ENCODE measurements at regions of chr1 and their contacts with region 1.

Region 1: GRCh38 chr1:6489799-6490180 is 1.7 kb downstream of the PLEKHG5 start:
- DNase-seq: peak; percentile 71
- H3K4me3 ChIP-seq: peak overlapping the region; percentile 26 to 62 (median 43)
- H3K27ac ChIP-seq: peak overlapping the region; percentile 86
- H3K4me1 ChIP-seq: peaks cover 44% of the 10 kb centered on the region
- H3K27me3 ChIP-seq: no peaks in the 10 kb centered on the region
- CTCF ChIP-seq: peak; percentile 90 to 97
- POLR2A ChIP-seq: no peak

Region 2: GRCh38 chr1:6235296-6235677 is 254.5 kb before region 1 on chr1:
- CTCF ChIA-PET with region 1: no interaction called
- POLR2A ChIA-PET with region 1: no interaction called
- dilution Hi-C with region 1: no loop called
- intact Hi-C with region 1: no loop called
- DNase-seq: no peak
- H3K4me3 ChIP-seq: peak overlapping the region; percentile 66 to 80 (median 68)
- H3K27ac ChIP-seq: peak overlapping the region; percentile 6
- H3K4me1 ChIP-seq: peaks cover 11% of the 10 kb centered on the region
- H3K27me3 ChIP-seq: peaks cover 8 to 9% of the 10 kb centered on the region in 2 experiments
- CTCF ChIP-seq: no peak
- POLR2A ChIP-seq: no peak

Region 3: DNA sequence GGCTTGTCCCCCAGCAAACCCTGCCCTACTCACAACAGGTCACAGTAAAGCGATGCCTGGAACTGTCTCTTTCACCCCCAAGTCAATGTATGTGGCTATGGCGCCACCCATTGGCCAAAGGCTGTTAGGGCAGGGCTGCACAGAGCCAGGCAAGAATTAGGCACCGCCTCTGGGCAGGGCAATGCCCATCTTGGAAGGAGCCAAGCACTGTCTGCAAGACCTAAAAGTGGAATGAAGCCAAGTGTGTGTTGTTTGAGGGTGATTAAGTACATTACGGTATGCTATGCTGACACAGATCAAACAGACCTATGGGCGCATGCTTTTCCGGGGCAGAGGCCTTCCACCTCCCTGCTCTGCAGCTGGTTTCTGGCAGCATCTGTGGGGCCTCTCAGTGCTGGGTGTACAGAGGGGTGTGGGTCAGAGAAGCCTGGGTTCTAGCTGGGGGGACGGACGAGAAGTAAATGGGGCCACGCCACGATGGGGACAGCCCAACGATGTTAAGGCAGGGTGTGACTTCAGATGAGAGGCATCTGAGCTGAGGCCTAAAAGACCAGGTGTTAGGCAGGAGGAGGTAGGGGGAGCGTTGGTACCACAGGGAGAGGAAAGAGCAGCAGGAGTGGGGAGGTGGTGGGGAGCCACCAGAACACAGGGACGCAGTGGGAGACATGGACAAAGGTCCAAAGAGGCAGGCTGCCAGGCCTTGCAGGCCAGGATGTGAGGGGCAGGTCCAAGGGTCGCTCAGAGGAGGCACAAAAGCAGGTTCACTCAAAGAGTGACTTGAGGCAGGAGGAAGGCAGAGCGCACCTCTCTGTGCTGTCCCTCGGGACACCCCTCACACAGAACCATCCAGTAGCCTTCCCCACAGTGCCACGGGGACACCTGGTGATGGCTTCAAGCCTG is 146.0 kb before region 1 on chr1:
- CTCF ChIA-PET with region 1: no interaction called
- POLR2A ChIA-PET with region 1: no interaction called
- dilution Hi-C with region 1: no loop called
- intact Hi-C with region 1: no loop called
- DNase-seq: peak; percentile 67
- H3K4me3 ChIP-seq: no peak overlapping the region
- H3K27ac ChIP-seq: no peak overlapping the region
- H3K4me1 ChIP-seq: peaks cover 7% of the 10 kb centered on the region
- H3K27me3 ChIP-seq: no peaks in the 10 kb centered on the region
- CTCF ChIP-seq: peak; percentile 89 to 94
- POLR2A ChIP-seq: no peak

Region 4: DNA sequence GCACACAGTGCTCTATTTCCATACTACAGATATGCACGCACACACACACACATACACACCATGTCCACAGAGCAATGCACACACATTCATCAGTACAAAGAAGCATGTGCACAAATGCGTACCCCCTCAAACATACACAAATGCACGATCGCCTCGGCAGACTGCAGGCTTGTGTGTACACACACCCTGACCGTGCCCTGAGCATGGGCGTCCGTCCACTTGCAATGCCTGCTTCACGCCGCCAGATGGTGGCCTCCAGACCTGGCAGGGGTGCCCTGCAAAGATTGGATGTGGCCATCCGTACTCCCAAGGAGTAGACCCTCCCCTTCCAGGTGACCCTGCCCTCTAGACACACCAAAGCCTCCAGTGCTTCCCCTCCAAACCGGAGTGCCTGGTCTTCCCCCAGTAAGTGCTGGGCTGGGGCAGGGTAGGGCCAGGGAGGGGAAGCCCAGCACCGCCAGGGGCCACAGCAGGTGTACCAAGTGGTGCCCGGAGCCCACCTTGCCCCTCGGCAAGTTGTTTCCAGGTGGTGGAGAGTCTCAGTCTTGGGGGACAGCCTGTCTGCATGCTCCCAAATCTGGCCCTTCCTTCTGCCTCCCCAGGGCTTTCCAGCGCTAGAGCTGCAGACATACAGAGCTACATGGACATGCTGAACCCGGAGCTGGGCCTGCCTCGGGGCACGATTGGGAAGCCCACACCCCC is 44.6 kb before region 1 on chr1:
- CTCF ChIA-PET with region 1: interaction called, 9 read pairs
- POLR2A ChIA-PET with region 1: no interaction called
- dilution Hi-C with region 1: no loop called
- intact Hi-C with region 1: loop called (anchors 2 kb)
- DNase-seq: peak; percentile 35
- H3K4me3 ChIP-seq: no peak overlapping the region
- H3K27ac ChIP-seq: no peak overlapping the region
- H3K4me1 ChIP-seq: no peaks in the 10 kb centered on the region
- H3K27me3 ChIP-seq: peaks cover 32 to 34% of the 10 kb centered on the region in 2 experiments
- CTCF ChIP-seq: peak; percentile 38 to 69
- POLR2A ChIP-seq: no peak

Region 5: GRCh38 chr1:6502000-6502891 is 12.5 kb after region 1 on chr1:
- CTCF ChIA-PET with region 1: interaction called, 36 read pairs
- POLR2A ChIA-PET with region 1: no interaction called
- dilution Hi-C with region 1: no loop called
- intact Hi-C with region 1: no loop called
- DNase-seq: peak; percentile 45
- H3K4me3 ChIP-seq: no peak overlapping the region
- H3K27ac ChIP-seq: no peak overlapping the region
- H3K4me1 ChIP-seq: peaks cover 3% of the 10 kb centered on the region
- H3K27me3 ChIP-seq: no peaks in the 10 kb centered on the region
- CTCF ChIP-seq: no peak
- POLR2A ChIP-seq: no peak

Region 6: DNA sequence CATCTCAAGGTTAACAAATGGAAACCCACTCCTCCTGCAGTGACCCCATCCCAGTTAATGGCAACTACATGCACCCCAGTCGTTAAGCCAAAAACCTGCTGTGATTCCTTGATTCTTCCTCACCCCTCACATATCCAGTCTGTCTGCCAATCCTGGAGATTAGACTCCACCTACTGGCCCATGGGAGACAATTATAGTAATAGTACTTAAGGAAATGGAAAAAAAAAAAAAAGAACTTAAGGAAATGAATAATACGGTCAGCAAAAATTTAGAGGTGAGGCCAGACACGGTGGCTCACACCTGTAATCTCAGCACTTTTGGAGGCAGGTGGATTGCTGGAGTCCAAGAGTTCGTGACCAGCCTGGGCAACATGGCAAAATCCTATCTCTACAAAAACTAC is 57.5 kb after region 1 on chr1:
- CTCF ChIA-PET with region 1: interaction called, 9 read pairs
- POLR2A ChIA-PET with region 1: no interaction called
- dilution Hi-C with region 1: no loop called
- intact Hi-C with region 1: loop called (anchors 1 kb)
- DNase-seq: peak; percentile 60
- H3K4me3 ChIP-seq: no peak overlapping the region
- H3K27ac ChIP-seq: no peak overlapping the region
- H3K4me1 ChIP-seq: peaks cover 35% of the 10 kb centered on the region
- H3K27me3 ChIP-seq: no peaks in the 10 kb centered on the region
- CTCF ChIP-seq: peak; percentile 15 to 20
- POLR2A ChIP-seq: no peak

Region 7: DNA sequence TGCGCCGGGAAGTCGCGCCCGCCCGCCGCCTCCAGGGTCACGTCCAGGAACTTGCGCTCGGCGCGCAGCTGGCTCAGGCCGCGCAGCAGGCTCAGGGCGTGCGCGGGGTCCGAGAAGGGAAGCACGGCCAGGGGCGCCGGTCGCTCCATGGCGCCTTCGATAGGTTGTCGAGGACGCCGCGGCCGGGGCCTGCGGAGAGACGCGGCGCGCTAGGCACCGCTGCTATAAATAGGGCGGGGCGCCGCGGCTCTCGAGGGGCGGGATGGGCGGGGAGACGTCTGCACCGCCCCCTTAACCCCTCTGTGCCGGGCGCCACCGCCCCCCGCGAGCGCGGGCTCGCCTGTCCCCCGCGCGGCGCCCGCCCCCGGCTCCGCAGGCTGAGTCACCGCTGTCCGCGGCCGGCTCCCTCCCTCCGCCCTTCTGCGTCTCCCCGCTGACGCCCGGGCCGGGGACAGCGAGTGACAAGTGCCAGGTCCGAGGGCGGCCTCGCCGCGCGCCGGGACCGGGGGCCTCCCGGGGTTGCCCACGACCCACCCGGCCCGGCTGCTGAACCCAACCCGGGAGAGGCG is 113.0 kb after region 1 on chr1 and contains the start of gene KLHL21:
- CTCF ChIA-PET with region 1: interaction called, 4 read pairs
- POLR2A ChIA-PET with region 1: no interaction called
- dilution Hi-C with region 1: no loop called
- intact Hi-C with region 1: loop called (anchors 2 kb)
- DNase-seq: peak; percentile 84
- H3K4me3 ChIP-seq: peak within 1 kb of the TSS; percentile 39 to 84 (median 74)
- H3K27ac ChIP-seq: peak within 1 kb of the TSS; percentile 86
- H3K4me1 ChIP-seq: peaks cover 23% of the 10 kb centered on the region
- H3K27me3 ChIP-seq: no peaks in the 10 kb centered on the region
- CTCF ChIP-seq: no peak
- POLR2A ChIP-seq: peak; percentile 99
- total RNA-seq, gene KLHL21: 19.2 and 22.4 TPM in 2 replicates

Region 8: GRCh38 chr1:6646499-6647148 is 156.8 kb after region 1 on chr1:
- CTCF ChIA-PET with region 1: interaction called, 18 read pairs
- POLR2A ChIA-PET with region 1: no interaction called
- dilution Hi-C with region 1: no loop called
- intact Hi-C with region 1: loop called (anchors 1 kb)
- DNase-seq: peak; percentile 47
- H3K4me3 ChIP-seq: no peak overlapping the region
- H3K27ac ChIP-seq: no peak overlapping the region
- H3K4me1 ChIP-seq: no peaks in the 10 kb centered on the region
- H3K27me3 ChIP-seq: no peaks in the 10 kb centered on the region
- CTCF ChIP-seq: peak; percentile 50 to 57
- POLR2A ChIP-seq: no peak

Measured in endothelial cell of umbilical vein (primary cell).